Calu3 (cell line): ENCODE measurements at regions of chr2 and their contacts with region 1.

Region 1: GRCh38 chr2:66574701-66575624 is 140.0 kb downstream of the MEIS1 start:
- DNase-seq: peak; percentile 59
- H3K4me3 Mint-ChIP-seq: peak overlapping the region; percentile 72
- H3K27ac Mint-ChIP-seq: peak overlapping the region; percentile 55
- H3K4me1 Mint-ChIP-seq: peaks cover 26% of the 10 kb centered on the region
- H3K27me3 Mint-ChIP-seq: peaks cover 22% of the 10 kb centered on the region
- CTCF ChIP-seq: peak; percentile 18

Region 2: DNA sequence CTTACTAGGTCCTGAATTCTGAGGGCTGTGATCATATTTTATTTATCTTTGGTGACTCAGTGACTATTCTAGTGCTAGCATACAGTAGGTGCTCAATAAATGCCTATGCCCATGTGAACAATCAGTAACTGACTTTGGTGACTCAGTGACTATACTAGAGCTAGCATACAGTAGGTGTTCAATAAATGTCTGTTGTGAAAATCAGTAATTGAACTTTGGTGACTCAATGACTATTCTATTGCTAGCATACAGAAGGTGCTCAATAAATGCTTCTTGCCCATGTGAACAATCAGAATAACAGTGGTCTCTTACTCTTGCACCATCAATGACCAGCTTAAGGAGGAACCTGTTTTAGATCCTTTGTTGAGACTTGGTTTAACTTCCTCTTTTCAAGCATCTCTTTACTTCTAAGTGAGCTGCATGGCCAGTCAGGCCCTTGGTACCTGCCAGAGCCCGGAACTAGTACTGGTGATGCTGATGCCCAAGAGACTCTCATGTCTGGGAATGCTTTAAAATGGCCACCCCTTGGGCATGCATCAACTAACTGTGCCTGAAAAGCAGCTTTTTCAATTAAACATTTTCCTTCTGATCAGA is 927.6 kb before region 1 on chr2:
- CTCF ChIA-PET with region 1: no interaction called
- intact Hi-C with region 1: loop called (anchors 10 kb)
- DNase-seq: no peak
- H3K4me3 Mint-ChIP-seq: no peak overlapping the region
- H3K27ac Mint-ChIP-seq: no peak overlapping the region
- H3K4me1 Mint-ChIP-seq: no peaks in the 10 kb centered on the region
- H3K27me3 Mint-ChIP-seq: no peaks in the 10 kb centered on the region
- CTCF ChIP-seq: no peak

Region 3: DNA sequence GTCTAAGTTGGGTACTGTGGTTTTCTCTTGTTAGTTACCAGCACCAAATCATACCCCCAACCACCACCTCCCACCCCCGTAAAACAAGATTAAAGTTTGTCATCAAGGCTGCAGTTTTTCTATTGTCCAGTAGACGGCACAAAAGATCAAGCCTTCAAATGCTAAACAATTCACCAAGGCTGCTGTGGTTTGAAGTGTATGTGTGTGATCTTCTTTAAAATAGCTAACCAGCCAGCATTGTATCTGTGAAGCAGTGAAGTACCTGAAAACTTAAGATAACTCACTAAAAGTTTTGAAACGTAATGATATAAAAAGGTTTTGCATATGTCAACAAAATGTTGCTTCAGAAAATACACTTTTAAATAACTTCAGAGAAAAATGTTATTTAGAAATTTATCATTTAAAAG is 145.9 kb before region 1 on chr2:
- CTCF ChIA-PET with region 1: interaction called, 13 read pairs
- intact Hi-C with region 1: loop called (anchors 1 kb)
- DNase-seq: peak; percentile 34
- H3K4me3 Mint-ChIP-seq: no peak overlapping the region
- H3K27ac Mint-ChIP-seq: no peak overlapping the region
- H3K4me1 Mint-ChIP-seq: peaks cover 26% of the 10 kb centered on the region
- H3K27me3 Mint-ChIP-seq: no peaks in the 10 kb centered on the region
- CTCF ChIP-seq: peak; percentile 65

Region 4: DNA sequence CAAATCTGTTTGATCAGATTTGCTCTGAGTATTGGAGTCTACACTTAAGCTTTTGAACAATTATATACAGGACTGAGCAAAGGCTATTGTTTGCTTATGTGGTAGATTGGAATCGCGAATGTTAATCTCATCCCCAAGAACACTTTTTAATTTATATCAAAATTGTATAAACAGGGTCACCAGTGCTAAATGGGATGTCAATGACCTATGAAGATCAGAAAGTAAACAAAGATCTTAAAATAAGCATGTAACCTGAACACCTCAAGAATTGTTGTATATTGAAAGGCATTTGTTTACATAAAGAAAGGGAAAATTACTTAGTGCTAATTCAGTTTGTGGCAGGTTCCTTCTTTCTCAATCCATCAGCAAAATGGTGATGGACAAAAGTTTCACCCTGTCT is 65.5 kb after region 1 on chr2:
- CTCF ChIA-PET with region 1: no interaction called
- intact Hi-C with region 1: no loop called
- DNase-seq: no peak
- H3K4me3 Mint-ChIP-seq: no peak overlapping the region
- H3K27ac Mint-ChIP-seq: no peak overlapping the region
- H3K4me1 Mint-ChIP-seq: no peaks in the 10 kb centered on the region
- H3K27me3 Mint-ChIP-seq: no peaks in the 10 kb centered on the region
- CTCF ChIP-seq: no peak

Region 5: GRCh38 chr2:66872081-66872985 is 297.4 kb after region 1 on chr2:
- CTCF ChIA-PET with region 1: no interaction called
- intact Hi-C with region 1: loop called (anchors 5 kb)
- DNase-seq: peak; percentile 24
- H3K4me3 Mint-ChIP-seq: peak overlapping the region; percentile 55
- H3K27ac Mint-ChIP-seq: peak overlapping the region; percentile 84
- H3K4me1 Mint-ChIP-seq: peaks cover 47% of the 10 kb centered on the region
- H3K27me3 Mint-ChIP-seq: no peaks in the 10 kb centered on the region
- CTCF ChIP-seq: no peak

Region 6: GRCh38 chr2:67322353-67323001 is 747.5 kb after region 1 on chr2:
- CTCF ChIA-PET with region 1: no interaction called
- intact Hi-C with region 1: loop called (anchors 5 kb)
- DNase-seq: peak; percentile 73
- H3K4me3 Mint-ChIP-seq: peak overlapping the region; percentile 12
- H3K27ac Mint-ChIP-seq: peak overlapping the region; percentile 87
- H3K4me1 Mint-ChIP-seq: peaks cover 29% of the 10 kb centered on the region
- H3K27me3 Mint-ChIP-seq: no peaks in the 10 kb centered on the region
- CTCF ChIP-seq: peak; percentile 71